ENCODE measurements at regions of chr3 and their contacts with region 1.

Region 1: GRCh38 chr3:77038468-77038929 is 1.4 kb upstream of the ROBO2 start:
- DNase-seq: peak; percentile 30 to 77
- ATAC-seq: peak; percentile 96 to 98
- H3K4me3 ChIP-seq: no peak overlapping the region; the same call in 2 of the 3 replicates
- H3K27ac ChIP-seq: no peak overlapping the region
- H3K4me1 ChIP-seq: peaks cover 9% of the 10 kb centered on the region; the same call in 1 of the 3 replicates
- CTCF ChIP-seq: peak; percentile 51
- EP300 ChIP-seq: no peak
- POLR2A ChIP-seq: no peak
- RAD21 ChIP-seq: peak; percentile 69 to 78

Region 2: GRCh38 chr3:77071809-77072208 is 33.3 kb after region 1 on chr3:
- CTCF ChIA-PET with region 1: no interaction called
- POLR2A ChIA-PET with region 1: no interaction called
- DNase-seq: no peak
- ATAC-seq: no peak
- H3K4me3 ChIP-seq: no peak overlapping the region
- H3K27ac ChIP-seq: no peak overlapping the region
- H3K4me1 ChIP-seq: no peaks in the 10 kb centered on the region
- CTCF ChIP-seq: no peak
- EP300 ChIP-seq: no peak
- POLR2A ChIP-seq: no peak
- RAD21 ChIP-seq: no peak

Region 3: GRCh38 chr3:77254967-77255831 is 216.7 kb after region 1 on chr3:
- CTCF ChIA-PET with region 1: interaction called, 10 read pairs
- POLR2A ChIA-PET with region 1: no interaction called
- DNase-seq: peak; percentile 6 to 52
- ATAC-seq: peak; percentile 59 to 78; a peak in 4 of 6 replicates
- H3K4me3 ChIP-seq: no peak overlapping the region
- H3K27ac ChIP-seq: no peak overlapping the region
- H3K4me1 ChIP-seq: no peaks in the 10 kb centered on the region
- CTCF ChIP-seq: peak; percentile 46
- EP300 ChIP-seq: no peak
- POLR2A ChIP-seq: no peak
- RAD21 ChIP-seq: peak; percentile 42 to 59; a peak in 4 of 5 replicates

Region 4: GRCh38 chr3:78249294-78249693 is 1210.8 kb after region 1 on chr3:
- CTCF ChIA-PET with region 1: no interaction called
- POLR2A ChIA-PET with region 1: no interaction called
- DNase-seq: no peak
- ATAC-seq: no peak
- H3K4me3 ChIP-seq: no peak overlapping the region
- H3K27ac ChIP-seq: no peak overlapping the region
- H3K4me1 ChIP-seq: no peaks in the 10 kb centered on the region
- CTCF ChIP-seq: no peak
- EP300 ChIP-seq: no peak
- POLR2A ChIP-seq: no peak
- RAD21 ChIP-seq: no peak

Region 5: GRCh38 chr3:78645628-78646310 is 1607.3 kb after region 1 on chr3:
- CTCF ChIA-PET with region 1: interaction called, 23 read pairs
- POLR2A ChIA-PET with region 1: no interaction called
- DNase-seq: peak; percentile 18 to 79
- ATAC-seq: peak in 1 of 2 experiments; percentile 74; a peak in 3 of 6 replicates
- H3K4me3 ChIP-seq: no peak overlapping the region
- H3K27ac ChIP-seq: no peak overlapping the region
- H3K4me1 ChIP-seq: no peaks in the 10 kb centered on the region
- CTCF ChIP-seq: peak; percentile 80
- EP300 ChIP-seq: no peak
- POLR2A ChIP-seq: no peak
- RAD21 ChIP-seq: peak; percentile 86 to 89

Measured in A549 (cell line).